CD14-positive monocyte (primary cell): ENCODE measurements at regions of chr1 and their contacts with region 1.

Region 1: GRCh38 chr1:214328770-214329469 is 48.0 kb downstream of the SMYD2 start:
- DNase-seq: peak; percentile 52 to 71 (median 62)
- H3K4me3 ChIP-seq: no peak overlapping the region
- H3K4me3 Mint-ChIP-seq: no peak overlapping the region
- H3K27ac ChIP-seq: no peak overlapping the region
- H3K27ac Mint-ChIP-seq: no peak overlapping the region
- H3K4me1 ChIP-seq: no peaks in the 10 kb centered on the region
- H3K4me1 Mint-ChIP-seq: peaks cover 2% of the 10 kb centered on the region
- H3K27me3 ChIP-seq: no peaks in the 10 kb centered on the region
- H3K27me3 Mint-ChIP-seq: peaks cover 0 to 3% (median 0%) of the 10 kb centered on the region in 3 donors
- CTCF ChIP-seq: peak; percentile 91

Region 2: GRCh38 chr1:213244664-213245091 is 1084.2 kb before region 1 on chr1:
- intact Hi-C with region 1: loop called in 1 of 2 experiments (anchors 5 kb)
- DNase-seq: peak; percentile 7 to 41 (median 21)
- H3K4me3 ChIP-seq: no peak overlapping the region
- H3K4me3 Mint-ChIP-seq: no peak overlapping the region
- H3K27ac ChIP-seq: no peak overlapping the region
- H3K27ac Mint-ChIP-seq: no peak overlapping the region
- H3K4me1 ChIP-seq: no peaks in the 10 kb centered on the region
- H3K4me1 Mint-ChIP-seq: peaks cover 3% of the 10 kb centered on the region
- H3K27me3 ChIP-seq: no peaks in the 10 kb centered on the region
- H3K27me3 Mint-ChIP-seq: no peaks in the 10 kb centered on the region
- CTCF ChIP-seq: peak; percentile 90

Region 3: GRCh38 chr1:214261206-214262123 is 67.5 kb before region 1 on chr1:
- intact Hi-C with region 1: loop called (anchors 1 to 5 kb)
- DNase-seq: peak; percentile 54 to 69 (median 63)
- H3K4me3 ChIP-seq: no peak overlapping the region
- H3K4me3 Mint-ChIP-seq: peak overlapping the region in 1 of 2 donors; percentile 82
- H3K27ac ChIP-seq: no peak overlapping the region
- H3K27ac Mint-ChIP-seq: no peak overlapping the region
- H3K4me1 ChIP-seq: no peaks in the 10 kb centered on the region
- H3K4me1 Mint-ChIP-seq: peaks cover 15% of the 10 kb centered on the region
- H3K27me3 ChIP-seq: peaks cover 50 to 57% of the 10 kb centered on the region in 2 donors
- H3K27me3 Mint-ChIP-seq: peaks cover 34 to 59% (median 46%) of the 10 kb centered on the region in 3 donors
- CTCF ChIP-seq: peak; percentile 96

Region 4: DNA sequence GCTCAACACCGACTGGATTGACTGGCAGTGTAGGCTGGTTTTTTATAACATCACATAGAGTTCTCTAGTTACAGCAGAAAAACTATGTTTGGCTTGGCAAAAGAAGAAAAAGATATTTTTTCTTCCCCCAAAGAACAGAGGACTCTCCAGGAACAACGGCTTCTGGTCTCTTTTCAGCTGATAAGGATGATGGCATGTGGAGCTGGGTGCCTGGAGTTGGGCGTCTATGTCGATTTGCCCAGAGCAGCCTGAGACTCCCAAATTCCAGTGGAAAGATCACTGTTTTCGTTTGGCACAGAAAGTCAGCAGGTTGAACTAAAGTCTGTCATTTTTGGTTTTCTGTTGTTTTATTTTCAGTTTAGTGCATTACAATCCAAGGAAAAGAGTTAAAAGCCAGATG is 43.2 kb after region 1 on chr1:
- intact Hi-C with region 1: no loop called
- DNase-seq: no peak
- H3K4me3 ChIP-seq: no peak overlapping the region
- H3K4me3 Mint-ChIP-seq: no peak overlapping the region
- H3K27ac ChIP-seq: no peak overlapping the region
- H3K27ac Mint-ChIP-seq: no peak overlapping the region
- H3K4me1 ChIP-seq: no peaks in the 10 kb centered on the region
- H3K4me1 Mint-ChIP-seq: no peaks in the 10 kb centered on the region
- H3K27me3 ChIP-seq: no peaks in the 10 kb centered on the region
- H3K27me3 Mint-ChIP-seq: peaks cover 0 to 4% (median 3%) of the 10 kb centered on the region in 3 donors
- CTCF ChIP-seq: no peak

Region 5: DNA sequence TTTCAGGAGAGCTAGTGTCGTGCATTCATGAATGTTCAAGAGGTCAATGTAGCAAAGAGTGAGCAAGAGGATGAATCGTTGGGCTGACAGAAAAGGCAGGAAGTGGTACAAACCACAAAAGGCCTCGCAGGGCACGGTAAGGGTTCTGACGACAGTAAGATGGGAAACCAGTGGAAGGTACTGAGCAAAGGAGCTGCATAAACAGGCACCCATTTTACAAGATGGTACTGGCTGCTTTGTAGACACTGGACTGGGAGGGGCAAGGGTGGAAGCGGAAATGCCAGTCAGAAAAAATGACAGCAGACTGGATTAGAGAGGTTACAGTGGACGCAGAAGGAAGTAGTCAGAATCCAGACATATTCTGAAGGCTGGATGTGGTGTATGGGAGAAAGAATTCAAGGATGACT is 99.0 kb after region 1 on chr1:
- intact Hi-C with region 1: no loop called
- DNase-seq: peak; percentile 45 to 79 (median 50)
- H3K4me3 ChIP-seq: peak overlapping the region in 1 of 3 experiments; percentile 52
- H3K4me3 Mint-ChIP-seq: peak overlapping the region; percentile 37 to 50
- H3K27ac ChIP-seq: peak overlapping the region in 1 of 2 donors; percentile 45
- H3K27ac Mint-ChIP-seq: peak overlapping the region in 6 of 7 donors; percentile 46 to 92 (median 84)
- H3K4me1 ChIP-seq: peaks cover 12 to 15% of the 10 kb centered on the region in 2 donors
- H3K4me1 Mint-ChIP-seq: peaks cover 18% of the 10 kb centered on the region
- H3K27me3 ChIP-seq: no peaks in the 10 kb centered on the region
- H3K27me3 Mint-ChIP-seq: peaks cover 0 to 3% (median 0%) of the 10 kb centered on the region in 3 donors
- CTCF ChIP-seq: no peak